HepG2 (cell line): ENCODE measurements at regions of chr20 and their contacts with region 1.

Region 1: GRCh38 chr20:39264506-39265172 is 302.5 kb downstream of the DHX35 start:
- DNase-seq: peak; percentile 63
- ATAC-seq: peak; percentile 84
- H3K4me3 ChIP-seq: no peak overlapping the region
- H3K27ac ChIP-seq: no peak overlapping the region
- H3K4me1 ChIP-seq: no peaks in the 10 kb centered on the region
- H3K27me3 ChIP-seq: peaks cover 0 to 2% of the 10 kb centered on the region in 2 experiments; a peak in 1 of 5 replicates
- CTCF ChIP-seq: peak; percentile 87
- EP300 ChIP-seq: no peak
- POLR2A ChIP-seq: no peak
- RAD21 ChIP-seq: 0 out of 2 replicates have a peak, but pooled peaks have one; percentile 14

Region 2: GRCh38 chr20:39112178-39112743 is 152.4 kb before region 1 on chr20:
- CTCF ChIA-PET with region 1: interaction called, 5 read pairs
- POLR2A ChIA-PET with region 1: no interaction called
- in situ Hi-C with region 1: no loop called
- intact Hi-C with region 1: loop called (anchors 1 kb)
- DNase-seq: peak; percentile 65
- ATAC-seq: peak; percentile 97
- H3K4me3 ChIP-seq: peak overlapping the region in 1 of 3 experiments; percentile 6; a peak in 1 of 6 replicates
- H3K27ac ChIP-seq: no peak overlapping the region
- H3K4me1 ChIP-seq: peaks cover 15% of the 10 kb centered on the region; the same call in 1 of the 2 replicates
- H3K27me3 ChIP-seq: peaks cover 4 to 23% of the 10 kb centered on the region in 2 experiments; a peak in 3 of 5 replicates
- CTCF ChIP-seq: peak; percentile 96
- EP300 ChIP-seq: no peak
- POLR2A ChIP-seq: no peak
- RAD21 ChIP-seq: peak; percentile 90

Region 3: GRCh38 chr20:39429716-39430115 is 165.1 kb after region 1 on chr20:
- CTCF ChIA-PET with region 1: interaction called, 9 read pairs
- POLR2A ChIA-PET with region 1: no interaction called
- in situ Hi-C with region 1: no loop called
- intact Hi-C with region 1: loop called (anchors 1 kb)
- DNase-seq: peak; percentile 20
- ATAC-seq: peak; percentile 77
- H3K4me3 ChIP-seq: no peak overlapping the region
- H3K27ac ChIP-seq: no peak overlapping the region
- H3K4me1 ChIP-seq: no peaks in the 10 kb centered on the region
- H3K27me3 ChIP-seq: no peaks in the 10 kb centered on the region
- CTCF ChIP-seq: peak; percentile 38
- EP300 ChIP-seq: no peak
- POLR2A ChIP-seq: no peak
- RAD21 ChIP-seq: no peak

Region 4: DNA sequence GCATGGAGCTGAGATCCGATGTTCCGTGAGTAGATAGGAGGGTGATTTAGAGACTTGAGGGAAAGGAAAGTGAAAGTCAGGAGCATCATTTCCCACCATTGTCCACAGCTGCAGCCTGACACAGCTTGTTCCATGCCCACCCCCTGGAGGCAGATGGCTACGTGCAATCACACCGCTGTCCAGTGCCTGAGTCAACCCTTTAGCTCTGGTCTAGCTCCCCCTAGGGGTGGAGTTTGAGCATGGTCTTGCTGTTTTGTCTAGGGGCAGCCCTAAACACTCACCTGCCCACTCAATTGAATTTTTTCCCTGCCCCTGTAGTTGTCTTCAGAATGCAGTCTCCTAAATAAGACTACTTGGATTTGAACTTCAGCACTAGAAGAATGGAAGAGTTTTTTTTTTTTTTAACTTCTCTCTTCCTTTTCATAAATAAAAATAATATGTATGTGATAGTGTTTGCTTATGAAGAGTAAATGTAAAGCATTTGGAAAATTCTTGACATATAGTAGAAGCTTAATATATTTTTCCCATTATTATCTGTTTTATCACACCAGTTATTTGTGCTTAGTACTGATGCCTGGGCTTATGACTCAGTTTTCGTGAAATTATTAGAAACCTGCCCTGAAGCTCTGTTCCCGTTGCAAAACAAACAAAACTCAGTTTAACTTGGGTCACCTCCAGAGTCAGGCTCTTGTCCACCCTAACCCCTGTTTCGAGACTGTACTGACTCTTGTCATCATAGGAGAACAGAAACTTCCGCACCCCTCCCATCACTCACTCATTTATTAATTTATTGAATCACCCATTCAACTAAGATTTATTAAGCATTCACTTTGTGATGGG is 609.6 kb after region 1 on chr20:
- CTCF ChIA-PET with region 1: no interaction called
- POLR2A ChIA-PET with region 1: no interaction called
- in situ Hi-C with region 1: no loop called
- intact Hi-C with region 1: loop called (anchors 10 kb)
- DNase-seq: peak; percentile 55
- ATAC-seq: peak; percentile 94
- H3K4me3 ChIP-seq: no peak overlapping the region
- H3K27ac ChIP-seq: no peak overlapping the region
- H3K4me1 ChIP-seq: peaks cover 10% of the 10 kb centered on the region; the same call in 1 of the 2 replicates
- H3K27me3 ChIP-seq: no peaks in the 10 kb centered on the region
- CTCF ChIP-seq: peak; percentile 61
- EP300 ChIP-seq: no peak
- POLR2A ChIP-seq: no peak
- RAD21 ChIP-seq: 0 out of 2 replicates have a peak, but pooled peaks have one; percentile 26

Region 5: DNA sequence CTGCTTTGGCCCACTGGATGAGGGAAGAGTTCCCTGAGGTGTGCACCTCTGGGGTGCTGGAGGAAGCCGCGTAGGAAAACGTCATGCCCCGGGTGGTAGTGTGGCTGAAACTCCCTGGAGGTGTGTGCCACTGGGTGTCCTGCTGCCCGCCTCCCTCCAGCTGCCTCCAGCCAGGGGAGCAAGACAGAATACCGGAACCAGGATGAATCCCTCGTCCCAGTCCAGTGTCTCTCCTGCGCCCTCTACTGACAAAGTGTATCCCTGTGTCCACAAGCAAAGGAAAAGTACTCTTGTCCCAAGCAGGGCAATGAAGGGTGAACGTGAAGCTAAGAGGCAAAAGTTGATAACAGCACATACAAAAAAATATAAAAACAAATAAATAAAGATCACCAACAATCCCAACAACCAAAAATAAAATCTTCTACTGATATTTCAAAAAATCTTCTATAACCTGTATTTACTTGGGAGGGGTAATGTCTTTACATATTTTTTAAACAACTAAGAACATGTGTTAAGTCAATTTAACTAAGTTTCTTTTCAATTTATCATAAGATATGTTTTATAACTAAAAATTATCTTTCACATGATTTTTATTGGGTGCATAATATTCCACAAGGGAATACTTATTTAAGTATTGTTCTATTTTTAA is 986.8 kb after region 1 on chr20:
- CTCF ChIA-PET with region 1: interaction called, 4 read pairs
- POLR2A ChIA-PET with region 1: no interaction called
- in situ Hi-C with region 1: no loop called
- intact Hi-C with region 1: loop called (anchors 1 kb)
- DNase-seq: peak; percentile 70
- ATAC-seq: peak; percentile 96
- H3K4me3 ChIP-seq: no peak overlapping the region
- H3K27ac ChIP-seq: no peak overlapping the region
- H3K4me1 ChIP-seq: no peaks in the 10 kb centered on the region
- H3K27me3 ChIP-seq: no peaks in the 10 kb centered on the region
- CTCF ChIP-seq: peak; percentile 87
- EP300 ChIP-seq: no peak
- POLR2A ChIP-seq: no peak
- RAD21 ChIP-seq: peak; percentile 49